WTC11 (cell line): ENCODE measurements at regions of chr16 and their contacts with region 1.

Region 1: GRCh38 chr16:21101631-21102420 is 48.8 kb downstream of the DNAH3 start:
- DNase-seq: peak; percentile 48
- ATAC-seq: peak; percentile 88
- H3K4me3 Mint-ChIP-seq: no peak overlapping the region
- H3K27ac Mint-ChIP-seq: no peak overlapping the region
- H3K4me1 Mint-ChIP-seq: peaks cover 14% of the 10 kb centered on the region
- H3K27me3 Mint-ChIP-seq: no peaks in the 10 kb centered on the region
- CTCF ChIP-seq: peak; percentile 3; the same call in 1 of the 2 replicates

Region 2: GRCh38 chr16:21116148-21116693 is 14.4 kb after region 1 on chr16:
- CTCF ChIA-PET with region 1: interaction called, 10 read pairs
- POLR2A ChIA-PET with region 1: no interaction called
- DNase-seq: no peak
- ATAC-seq: peak; percentile 60
- H3K4me3 Mint-ChIP-seq: peak overlapping the region; percentile 56
- H3K27ac Mint-ChIP-seq: peak overlapping the region; percentile 84
- H3K4me1 Mint-ChIP-seq: peaks cover 20% of the 10 kb centered on the region
- H3K27me3 Mint-ChIP-seq: no peaks in the 10 kb centered on the region
- CTCF ChIP-seq: no peak